Heart right ventricle (tissue), 16 donors: ENCODE measurements at regions of chr6 and their contacts with region 1.

Region 1: GRCh38 chr6:144710237-144710636 is 425.1 kb downstream of the UTRN start:
- DNase-seq: no peak
- ATAC-seq: no peak
- H3K4me3 ChIP-seq: no peak overlapping the region
- H3K27ac ChIP-seq: no peak overlapping the region
- H3K4me1 ChIP-seq: peaks cover 0 to 6% (median 0%) of the 10 kb centered on the region in 9 donors
- H3K27me3 ChIP-seq: no peaks in the 10 kb centered on the region
- CTCF ChIP-seq: no peak

Region 2: DNA sequence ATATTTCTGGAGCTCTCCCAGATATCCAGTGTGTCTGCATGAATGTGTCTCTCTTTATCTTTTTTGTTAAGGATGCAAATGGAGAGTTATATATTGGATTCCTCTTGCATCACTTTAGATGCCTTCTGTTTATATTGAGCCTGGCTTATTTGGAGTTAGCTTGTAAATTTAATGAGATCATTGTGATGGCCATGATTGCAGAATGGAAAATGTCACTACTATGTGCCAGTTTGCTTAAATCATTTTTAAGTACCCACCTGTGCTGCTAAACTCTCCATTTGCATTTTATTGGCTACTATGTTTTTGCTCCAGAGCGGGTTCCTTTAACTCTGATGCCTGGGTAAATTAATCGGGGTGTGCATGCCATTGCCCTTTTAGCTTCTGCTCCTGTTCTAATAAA is 90.3 kb before region 1 on chr6:
- intact Hi-C with region 1: loop called in 1 of 10 experiments (anchors 10 kb)
- DNase-seq: no peak
- ATAC-seq: no peak
- H3K4me3 ChIP-seq: no peak overlapping the region
- H3K27ac ChIP-seq: no peak overlapping the region
- H3K4me1 ChIP-seq: peaks cover 0 to 9% (median 0%) of the 10 kb centered on the region in 9 donors
- H3K27me3 ChIP-seq: no peaks in the 10 kb centered on the region
- CTCF ChIP-seq: no peak